Activated CD4-positive, alpha-beta memory T cell treated with anti-CD3 and anti-CD28 coated beads, Interleukin-2, amount 10 ng/mL, durations not matched to agents 7 days and 5 days (primary cell): ENCODE measurements at regions of chr9 and their contacts with region 1.

Region 1: GRCh38 chr9:99012942-99013512 is 69.3 kb downstream of the COL15A1 start:
- DNase-seq: no peak
- H3K4me3 Mint-ChIP-seq: no peak overlapping the region
- H3K27ac Mint-ChIP-seq: peak overlapping the region; percentile 68
- H3K4me1 Mint-ChIP-seq: peaks cover 16% of the 10 kb centered on the region
- H3K27me3 Mint-ChIP-seq: no peaks in the 10 kb centered on the region

Region 2: GRCh38 chr9:99026338-99027298 is 13.6 kb after region 1 on chr9:
- CTCF ChIA-PET with region 1: interaction called, 10 read pairs
- POLR2A ChIA-PET with region 1: interaction called, 7 read pairs
- DNase-seq: no peak
- H3K4me3 Mint-ChIP-seq: no peak overlapping the region
- H3K27ac Mint-ChIP-seq: peak overlapping the region; percentile 15
- H3K4me1 Mint-ChIP-seq: peaks cover 26% of the 10 kb centered on the region
- H3K27me3 Mint-ChIP-seq: peaks cover 14% of the 10 kb centered on the region

Region 3: DNA sequence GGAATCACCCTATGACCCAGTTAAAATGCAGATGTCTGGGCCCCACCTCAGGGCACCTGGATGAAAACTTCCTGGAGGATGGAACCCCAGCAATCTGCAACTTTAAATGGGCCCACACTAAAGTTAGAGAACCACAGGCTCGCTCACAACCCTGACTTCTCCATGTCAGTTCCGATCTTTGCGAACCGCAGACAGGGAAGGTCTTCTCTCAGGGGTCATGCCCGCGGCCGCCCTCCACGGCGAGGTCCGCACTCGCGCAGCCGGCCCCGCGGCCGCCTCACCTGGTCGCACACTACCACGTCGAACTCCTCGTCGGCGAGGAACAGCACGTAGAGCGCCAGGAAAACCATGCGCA is 208.2 kb after region 1 on chr9:
- CTCF ChIA-PET with region 1: no interaction called
- POLR2A ChIA-PET with region 1: no interaction called
- DNase-seq: no peak
- H3K4me3 Mint-ChIP-seq: peak overlapping the region; percentile 98
- H3K27ac Mint-ChIP-seq: peak overlapping the region; percentile 81
- H3K4me1 Mint-ChIP-seq: peaks cover 68% of the 10 kb centered on the region
- H3K27me3 Mint-ChIP-seq: no peaks in the 10 kb centered on the region